PC-9 (cell line): ENCODE measurements at regions of chr5 and their contacts with region 1.

Region 1: GRCh38 chr5:45774528-45774927 is 78.3 kb upstream of the HCN1 start:
- DNase-seq: no peak
- H3K4me3 ChIP-seq: no peak overlapping the region
- H3K27ac ChIP-seq: no peak overlapping the region
- H3K4me1 ChIP-seq: no peaks in the 10 kb centered on the region
- H3K27me3 ChIP-seq: no peaks in the 10 kb centered on the region
- CTCF ChIP-seq: peak; percentile 75

Region 2: GRCh38 chr5:44952376-44952775 is 822.2 kb before region 1 on chr5:
- CTCF ChIA-PET with region 1: no interaction called
- POLR2A ChIA-PET with region 1: no interaction called
- intact Hi-C with region 1: loop called (anchors 10 kb)
- DNase-seq: peak; percentile 35 to 43
- H3K4me3 ChIP-seq: no peak overlapping the region
- H3K27ac ChIP-seq: no peak overlapping the region
- H3K4me1 ChIP-seq: no peaks in the 10 kb centered on the region
- H3K27me3 ChIP-seq: no peaks in the 10 kb centered on the region
- CTCF ChIP-seq: peak; percentile 92

Region 3: DNA sequence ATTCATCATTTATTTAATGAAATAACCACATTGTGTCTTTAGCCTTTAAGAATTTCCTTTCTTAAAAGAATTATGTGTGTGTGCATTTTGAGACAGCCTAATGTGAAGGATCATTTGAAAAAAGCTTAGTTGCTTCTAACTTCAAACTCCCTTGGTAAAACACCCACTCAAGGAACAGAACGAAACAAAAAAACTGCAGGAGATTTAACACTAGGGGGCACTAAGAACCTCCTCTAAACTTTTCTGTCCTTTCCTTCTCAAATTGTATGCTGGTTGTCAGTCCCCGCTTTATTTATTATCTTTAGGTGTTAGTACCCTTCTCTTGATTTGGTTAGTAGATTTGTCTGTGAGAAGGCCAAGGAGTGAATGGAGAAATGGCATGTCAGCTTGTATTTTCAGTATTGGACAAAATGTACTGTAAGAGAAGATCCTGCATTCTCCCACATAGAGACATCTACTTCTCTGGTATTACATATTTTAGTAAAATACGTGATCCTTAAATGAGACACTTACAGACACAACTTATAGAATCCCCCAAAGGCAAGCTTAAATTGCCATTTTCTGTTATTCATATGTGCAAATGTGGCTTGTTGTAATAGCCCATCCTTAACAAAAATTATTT is 736.1 kb before region 1 on chr5:
- CTCF ChIA-PET with region 1: no interaction called
- POLR2A ChIA-PET with region 1: no interaction called
- intact Hi-C with region 1: loop called (anchors 10 kb)
- DNase-seq: peak in 1 of 2 experiments; percentile 12
- H3K4me3 ChIP-seq: no peak overlapping the region
- H3K27ac ChIP-seq: no peak overlapping the region
- H3K4me1 ChIP-seq: no peaks in the 10 kb centered on the region
- H3K27me3 ChIP-seq: no peaks in the 10 kb centered on the region
- CTCF ChIP-seq: peak; percentile 86